K562 (cell line): ENCODE measurements at regions of chr21 and their contacts with region 1.

Region 1: GRCh38 chr21:32819694-32820093 is 48.1 kb upstream of the PAXBP1 start:
- DNase-seq: no peak
- ATAC-seq: no peak
- H3K4me3 ChIP-seq: no peak overlapping the region
- H3K27ac ChIP-seq: no peak overlapping the region
- H3K4me1 ChIP-seq: no peaks in the 10 kb centered on the region
- H3K27me3 ChIP-seq: peaks cover 7 to 15% of the 10 kb centered on the region in 2 experiments; a peak in 3 of 5 replicates
- CTCF ChIP-seq: no peak
- EP300 ChIP-seq: no peak
- POLR2A ChIP-seq: no peak
- RAD21 ChIP-seq: no peak

Region 2: GRCh38 chr21:32658524-32658923 is 161.2 kb before region 1 on chr21:
- CTCF ChIA-PET with region 1: interaction called, 24 read pairs
- POLR2A ChIA-PET with region 1: no interaction called
- in situ Hi-C with region 1: loop called (anchors 5 kb)
- intact Hi-C with region 1: no loop called
- DNase-seq: no peak
- ATAC-seq: no peak
- H3K4me3 ChIP-seq: no peak overlapping the region
- H3K27ac ChIP-seq: no peak overlapping the region
- H3K4me1 ChIP-seq: no peaks in the 10 kb centered on the region
- H3K27me3 ChIP-seq: no peaks in the 10 kb centered on the region
- CTCF ChIP-seq: no peak
- EP300 ChIP-seq: no peak
- POLR2A ChIP-seq: no peak
- RAD21 ChIP-seq: no peak